BJ (cell line): ENCODE measurements at regions of chr7 and their contacts with region 1.

Region 1: GRCh38 chr7:142632291-142633134 is 116.8 kb upstream of the PRSS1 start:
- DNase-seq: no peak
- H3K4me3 ChIP-seq: no peak overlapping the region
- H3K27me3 ChIP-seq: no peaks in the 10 kb centered on the region
- CTCF ChIP-seq: peak; percentile 79

Region 2: GRCh38 chr7:142612237-142612881 is 20.2 kb before region 1 on chr7:
- CTCF ChIA-PET with region 1: interaction called, 15 read pairs
- POLR2A ChIA-PET with region 1: no interaction called
- DNase-seq: no peak
- H3K4me3 ChIP-seq: no peak overlapping the region
- H3K27me3 ChIP-seq: no peaks in the 10 kb centered on the region
- CTCF ChIP-seq: no peak